ENCODE measurements at regions of chr11 and their contacts with region 1.

Region 1: DNA sequence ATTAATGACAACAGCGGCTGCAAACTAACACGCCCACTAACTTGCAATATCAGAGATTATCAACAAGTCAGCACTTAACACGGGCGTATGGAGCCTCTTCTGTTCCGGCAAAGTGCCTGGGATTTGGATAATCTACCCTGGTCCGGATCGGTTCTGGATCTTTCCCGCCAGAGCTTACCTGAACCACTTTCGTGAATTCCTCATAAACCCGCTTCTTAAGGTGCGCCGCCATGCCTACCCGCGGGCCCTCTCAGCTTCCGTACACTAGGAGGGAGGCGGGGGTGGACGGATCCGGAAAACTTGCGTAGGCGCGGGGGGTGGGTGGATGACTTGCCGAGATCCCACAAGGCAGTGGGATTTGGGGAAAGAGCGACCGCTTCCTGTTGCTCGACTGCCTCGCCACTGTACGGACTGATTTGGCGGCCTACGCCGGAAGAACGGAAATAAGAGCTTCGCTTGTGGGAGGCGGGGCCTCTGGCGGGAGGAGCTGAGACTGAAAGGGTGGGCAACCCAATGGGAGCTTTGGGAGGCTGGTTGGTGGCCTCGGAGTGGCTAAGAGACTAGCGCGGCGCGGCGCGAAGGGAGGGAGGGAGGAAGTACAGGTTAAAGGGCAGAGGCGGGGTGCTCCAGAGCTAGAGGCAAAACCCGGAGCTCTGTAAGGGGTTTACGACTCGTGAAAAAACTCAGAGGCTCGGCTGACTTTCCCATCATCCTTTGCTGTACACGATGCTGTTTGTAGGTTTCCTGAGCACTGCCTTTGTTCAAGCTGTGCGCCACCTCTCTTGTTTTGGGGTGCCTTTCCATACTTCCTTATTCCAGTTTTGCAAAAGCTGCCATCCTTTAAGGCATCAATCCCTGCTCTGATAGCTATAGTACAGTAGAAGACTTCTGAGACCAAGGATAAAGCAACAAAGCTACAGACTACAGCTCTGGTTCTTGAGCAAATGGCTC is at the start of gene INTS4:
- DNase-seq: peak; percentile 95 to 100 (median 97)
- ATAC-seq: peak; percentile 96
- H3K4me3 ChIP-seq: peak within 1 kb of the TSS; percentile 83
- H3K4me3 Mint-ChIP-seq: peak within 1 kb of the TSS; percentile 96
- H3K27ac ChIP-seq: peak within 1 kb of the TSS; percentile 77 to 85
- H3K27ac Mint-ChIP-seq: peak within 1 kb of the TSS; percentile 95
- H3K4me1 ChIP-seq: peaks cover 22% of the 10 kb centered on the region
- H3K4me1 Mint-ChIP-seq: peaks cover 39% of the 10 kb centered on the region
- H3K27me3 ChIP-seq: no peaks in the 10 kb centered on the region
- H3K27me3 Mint-ChIP-seq: no peaks in the 10 kb centered on the region
- CTCF ChIP-seq: no peak
- total RNA-seq, gene INTS4: 46.5 to 49.2 TPM

Region 2: GRCh38 chr11:77637345-77638165 is 357.1 kb before region 1 on chr11 and contains the start of gene CLNS1A:
- CTCF ChIA-PET with region 1: no interaction called
- POLR2A ChIA-PET with region 1: no interaction called
- intact Hi-C with region 1: loop called in 1 of 2 experiments (anchors 5 kb)
- DNase-seq: peak; percentile 61 to 89 (median 74)
- ATAC-seq: peak; percentile 99
- H3K4me3 ChIP-seq: peak within 1 kb of the TSS; percentile 92
- H3K4me3 Mint-ChIP-seq: peak within 1 kb of the TSS; percentile 98
- H3K27ac ChIP-seq: peak within 1 kb of the TSS; percentile 65 to 77
- H3K27ac Mint-ChIP-seq: peak within 1 kb of the TSS; percentile 85
- H3K4me1 ChIP-seq: peaks cover 31% of the 10 kb centered on the region
- H3K4me1 Mint-ChIP-seq: peaks cover 48% of the 10 kb centered on the region
- H3K27me3 ChIP-seq: peaks cover 0 to 2% of the 10 kb centered on the region in 2 experiments
- H3K27me3 Mint-ChIP-seq: no peaks in the 10 kb centered on the region
- CTCF ChIP-seq: no peak
- total RNA-seq, gene CLNS1A: 87.8 to 93.1 TPM

Region 3: GRCh38 chr11:78011301-78011700 is 16.6 kb after region 1 on chr11:
- CTCF ChIA-PET with region 1: no interaction called
- POLR2A ChIA-PET with region 1: no interaction called
- intact Hi-C with region 1: loop called in 1 of 2 experiments (anchors 1 kb)
- DNase-seq: no peak
- ATAC-seq: no peak
- H3K4me3 ChIP-seq: no peak overlapping the region
- H3K4me3 Mint-ChIP-seq: no peak overlapping the region
- H3K27ac ChIP-seq: no peak overlapping the region
- H3K27ac Mint-ChIP-seq: no peak overlapping the region
- H3K4me1 ChIP-seq: no peaks in the 10 kb centered on the region
- H3K4me1 Mint-ChIP-seq: no peaks in the 10 kb centered on the region
- H3K27me3 ChIP-seq: no peaks in the 10 kb centered on the region
- H3K27me3 Mint-ChIP-seq: no peaks in the 10 kb centered on the region
- CTCF ChIP-seq: no peak

Region 4: DNA sequence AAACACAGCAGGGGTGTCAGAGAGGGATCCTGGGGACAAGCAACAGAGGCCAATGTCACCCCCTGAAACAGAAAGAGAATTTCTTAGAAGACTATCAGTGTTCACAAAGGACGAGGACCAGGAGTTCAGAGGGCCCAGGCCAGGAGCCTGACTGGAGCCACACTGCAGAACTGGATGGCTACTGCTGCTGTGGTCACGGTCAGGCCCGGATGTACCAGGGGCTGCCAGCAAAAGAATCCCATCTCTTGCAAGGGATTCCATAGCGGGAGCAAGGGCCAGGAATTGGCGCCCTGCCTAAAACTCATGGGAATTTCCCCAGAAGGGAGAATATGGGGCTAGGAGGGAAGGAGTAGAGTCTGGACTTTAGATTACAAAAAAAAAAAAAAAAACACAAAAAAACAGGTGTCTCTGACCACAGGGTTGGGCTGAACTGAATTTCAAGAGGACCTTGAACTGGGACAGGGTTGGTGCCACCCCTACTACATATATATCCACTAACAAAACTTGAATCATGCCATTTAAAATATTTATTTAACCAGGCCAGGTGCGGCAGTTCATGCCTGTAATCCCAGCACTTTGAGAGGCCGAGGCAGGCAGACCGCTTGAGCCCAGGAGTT is 44.1 kb after region 1 on chr11:
- CTCF ChIA-PET with region 1: no interaction called
- POLR2A ChIA-PET with region 1: no interaction called
- intact Hi-C with region 1: no loop called
- DNase-seq: no peak
- ATAC-seq: no peak
- H3K4me3 ChIP-seq: no peak overlapping the region
- H3K4me3 Mint-ChIP-seq: no peak overlapping the region
- H3K27ac ChIP-seq: no peak overlapping the region
- H3K27ac Mint-ChIP-seq: no peak overlapping the region
- H3K4me1 ChIP-seq: peaks cover 6% of the 10 kb centered on the region
- H3K4me1 Mint-ChIP-seq: peaks cover 13% of the 10 kb centered on the region
- H3K27me3 ChIP-seq: no peaks in the 10 kb centered on the region
- H3K27me3 Mint-ChIP-seq: peaks cover 6% of the 10 kb centered on the region
- CTCF ChIP-seq: no peak

Region 5: DNA sequence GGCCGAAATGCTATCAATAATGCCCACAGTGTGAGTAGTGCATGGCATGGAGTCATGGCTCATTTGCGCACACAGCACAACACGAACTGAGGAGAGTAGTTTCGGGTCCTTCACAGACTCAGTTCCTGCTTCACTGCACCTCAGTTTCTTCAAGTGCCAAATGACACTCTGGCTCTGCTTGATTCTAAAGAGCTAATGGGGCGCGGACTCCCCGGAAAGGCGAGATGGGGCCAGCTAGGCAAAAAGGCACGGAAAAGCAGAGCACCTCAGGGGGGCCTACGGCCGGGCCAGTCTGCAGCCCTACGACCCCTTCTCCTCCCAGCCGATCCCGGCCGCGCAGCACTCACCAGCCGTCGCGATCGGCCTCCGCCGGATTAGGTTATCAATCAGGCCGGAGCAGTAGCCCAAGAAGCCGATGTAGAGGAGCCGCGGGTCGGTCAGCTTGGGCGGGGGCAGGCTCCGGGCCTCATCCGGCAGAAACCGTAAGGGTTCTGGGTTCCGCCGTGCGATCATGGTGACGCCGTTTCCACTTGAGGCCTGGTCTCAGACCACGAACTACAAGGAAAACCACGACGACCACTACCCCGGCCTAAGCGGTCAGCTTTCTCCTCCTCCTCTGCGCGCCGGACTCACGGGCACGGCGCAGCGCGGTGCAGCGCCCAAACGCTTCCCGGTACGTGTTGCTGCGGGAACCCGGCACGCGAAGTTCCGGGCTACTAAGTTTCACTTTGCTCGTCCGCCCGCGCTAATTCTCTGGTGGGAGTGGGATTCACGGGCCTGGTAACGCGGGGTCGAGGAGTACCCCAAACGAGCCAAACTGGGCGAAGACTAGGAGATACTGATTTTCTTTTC is 84.8 kb after region 1 on chr11 and contains the start of gene NDUFC2:
- CTCF ChIA-PET with region 1: interaction called, 4 read pairs
- POLR2A ChIA-PET with region 1: interaction called, 27 read pairs
- intact Hi-C with region 1: loop called in 1 of 2 experiments (anchors 5 kb)
- DNase-seq: peak; percentile 45 to 82 (median 58)
- ATAC-seq: peak; percentile 79
- H3K4me3 ChIP-seq: peak within 1 kb of the TSS; percentile 88
- H3K4me3 Mint-ChIP-seq: peak within 1 kb of the TSS; percentile 96
- H3K27ac ChIP-seq: peak within 1 kb of the TSS; percentile 57 to 65
- H3K27ac Mint-ChIP-seq: peak within 1 kb of the TSS; percentile 93
- H3K4me1 ChIP-seq: peaks cover 41% of the 10 kb centered on the region
- H3K4me1 Mint-ChIP-seq: peaks cover 60% of the 10 kb centered on the region
- H3K27me3 ChIP-seq: no peaks in the 10 kb centered on the region
- H3K27me3 Mint-ChIP-seq: no peaks in the 10 kb centered on the region
- CTCF ChIP-seq: no peak
- total RNA-seq, gene NDUFC2: 62.6 to 68.5 TPM

Region 6: DNA sequence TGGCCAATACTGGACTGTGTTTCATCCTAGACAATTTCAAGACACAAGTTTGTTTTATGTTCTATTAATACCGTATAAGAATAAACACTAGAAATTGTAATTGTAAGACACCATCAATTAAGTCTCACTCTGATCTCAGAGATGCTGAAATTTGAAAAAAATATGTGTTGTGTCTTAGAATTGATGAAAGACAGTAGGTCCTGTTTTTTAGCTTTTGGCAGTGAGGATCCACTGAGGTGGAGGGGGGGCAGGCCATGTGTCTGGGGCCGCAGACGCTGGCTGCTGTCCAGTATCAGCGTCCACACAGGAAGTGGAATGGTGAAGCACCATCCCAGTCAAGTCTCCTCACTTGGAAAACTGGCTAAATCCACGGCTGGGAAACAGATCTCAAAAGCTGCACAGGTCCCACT is 167.3 kb after region 1 on chr11:
- CTCF ChIA-PET with region 1: no interaction called
- POLR2A ChIA-PET with region 1: no interaction called
- intact Hi-C with region 1: no loop called
- DNase-seq: no peak
- ATAC-seq: no peak
- H3K4me3 ChIP-seq: no peak overlapping the region
- H3K4me3 Mint-ChIP-seq: no peak overlapping the region
- H3K27ac ChIP-seq: no peak overlapping the region
- H3K27ac Mint-ChIP-seq: no peak overlapping the region
- H3K4me1 ChIP-seq: no peaks in the 10 kb centered on the region
- H3K4me1 Mint-ChIP-seq: no peaks in the 10 kb centered on the region
- H3K27me3 ChIP-seq: no peaks in the 10 kb centered on the region
- H3K27me3 Mint-ChIP-seq: no peaks in the 10 kb centered on the region
- CTCF ChIP-seq: no peak

Region 7: GRCh38 chr11:78188286-78189173 is 193.8 kb after region 1 on chr11 and contains the starts of genes KCTD21 and USP35:
- CTCF ChIA-PET with region 1: no interaction called
- POLR2A ChIA-PET with region 1: interaction called, 22 read pairs
- intact Hi-C with region 1: loop called (anchors 1 to 2 kb)
- DNase-seq: peak; percentile 80 to 96 (median 88)
- ATAC-seq: peak; percentile 82
- H3K4me3 ChIP-seq: peak within 1 kb of the TSS; percentile 97
- H3K4me3 Mint-ChIP-seq: peak within 1 kb of the TSS; percentile 99
- H3K27ac ChIP-seq: peak within 1 kb of the TSS; percentile 56 to 86
- H3K27ac Mint-ChIP-seq: peak within 1 kb of the TSS; percentile 99
- H3K4me1 ChIP-seq: peaks cover 53% of the 10 kb centered on the region
- H3K4me1 Mint-ChIP-seq: peaks cover 55% of the 10 kb centered on the region
- H3K27me3 ChIP-seq: no peaks in the 10 kb centered on the region
- H3K27me3 Mint-ChIP-seq: no peaks in the 10 kb centered on the region
- CTCF ChIP-seq: no peak
- total RNA-seq, gene KCTD21: 3.5 to 6.5 TPM
- total RNA-seq, gene USP35: 29.2 to 33.1 TPM

Region 8: DNA sequence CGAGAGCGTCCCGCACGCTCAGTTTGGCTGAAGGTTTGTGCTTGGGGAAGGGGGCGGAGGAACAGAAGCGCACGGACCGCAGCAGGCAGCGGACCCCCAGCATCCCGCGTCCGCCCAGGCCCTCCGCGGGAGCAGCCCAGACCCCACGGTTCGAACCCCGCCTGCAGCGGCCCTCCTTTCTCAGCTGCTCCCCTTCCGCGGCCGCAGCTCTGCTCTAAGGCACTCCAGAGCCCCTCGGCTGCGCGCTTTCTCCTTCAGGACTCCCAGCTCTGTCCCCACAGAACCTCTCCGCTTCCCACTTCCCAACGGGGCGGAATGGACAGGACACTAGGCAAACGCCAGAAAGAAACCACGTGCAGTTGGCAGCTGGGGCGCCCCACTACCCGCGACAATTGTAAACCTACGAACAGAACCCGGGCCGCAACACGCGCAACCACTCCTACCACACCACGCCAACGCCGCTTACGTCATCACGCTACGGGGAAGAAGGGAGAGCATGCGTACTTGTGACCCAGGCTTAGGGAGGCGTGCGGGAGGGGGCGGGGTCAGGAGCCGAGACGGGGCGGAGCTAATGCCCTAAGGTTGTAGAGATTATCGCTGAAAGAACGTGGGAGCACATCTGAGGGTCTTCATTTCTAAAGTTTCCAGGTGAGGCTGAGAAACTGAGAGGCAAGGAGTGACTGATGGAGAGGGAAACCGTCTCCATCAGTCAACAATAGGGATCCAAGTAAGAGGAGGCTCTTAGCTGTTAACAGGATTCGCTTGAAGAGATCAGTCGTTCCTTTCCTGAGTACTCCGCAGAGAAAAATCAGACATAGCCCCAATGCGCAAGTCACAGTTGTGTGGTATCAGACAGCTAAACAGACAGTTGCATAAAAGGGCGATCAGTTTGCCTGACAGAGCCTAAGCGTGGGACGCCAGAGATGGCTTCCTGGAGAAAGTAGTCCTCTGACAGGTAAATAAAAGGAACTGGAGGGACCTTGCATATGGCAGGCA is 580.0 kb after region 1 on chr11 and contains the start of gene NARS2:
- CTCF ChIA-PET with region 1: no interaction called
- POLR2A ChIA-PET with region 1: interaction called, 16 read pairs
- intact Hi-C with region 1: loop called in 1 of 2 experiments (anchors 2 kb)
- DNase-seq: peak; percentile 94 to 99 (median 98)
- ATAC-seq: peak; percentile 96
- H3K4me3 ChIP-seq: peak within 1 kb of the TSS; percentile 82
- H3K4me3 Mint-ChIP-seq: peak within 1 kb of the TSS; percentile 93
- H3K27ac ChIP-seq: peak within 1 kb of the TSS; percentile 62 to 74
- H3K27ac Mint-ChIP-seq: peak within 1 kb of the TSS; percentile 96
- H3K4me1 ChIP-seq: peaks cover 14% of the 10 kb centered on the region
- H3K4me1 Mint-ChIP-seq: peaks cover 48% of the 10 kb centered on the region
- H3K27me3 ChIP-seq: no peaks in the 10 kb centered on the region
- H3K27me3 Mint-ChIP-seq: no peaks in the 10 kb centered on the region
- CTCF ChIP-seq: no peak
- total RNA-seq, gene NARS2: 8.7 to 9.3 TPM